ENCODE measurements at regions of chr1 and their contacts with region 1.

Region 1: GRCh38 chr1:109112652-109113285 is 1.1 kb upstream of the ELAPOR1 start:
- DNase-seq: peak; percentile 85
- ATAC-seq: peak; percentile 96
- H3K4me3 ChIP-seq: peak overlapping the region in 1 of 3 experiments; percentile 45; a peak in 2 of 6 replicates
- H3K27ac ChIP-seq: no peak overlapping the region
- H3K4me1 ChIP-seq: peaks cover 43% of the 10 kb centered on the region
- H3K27me3 ChIP-seq: peaks cover 2 to 36% of the 10 kb centered on the region in 2 experiments; a peak in 4 of 5 replicates
- CTCF ChIP-seq: peak; percentile 94
- EP300 ChIP-seq: no peak
- POLR2A ChIP-seq: no peak
- RAD21 ChIP-seq: peak; percentile 77

Region 2: DNA sequence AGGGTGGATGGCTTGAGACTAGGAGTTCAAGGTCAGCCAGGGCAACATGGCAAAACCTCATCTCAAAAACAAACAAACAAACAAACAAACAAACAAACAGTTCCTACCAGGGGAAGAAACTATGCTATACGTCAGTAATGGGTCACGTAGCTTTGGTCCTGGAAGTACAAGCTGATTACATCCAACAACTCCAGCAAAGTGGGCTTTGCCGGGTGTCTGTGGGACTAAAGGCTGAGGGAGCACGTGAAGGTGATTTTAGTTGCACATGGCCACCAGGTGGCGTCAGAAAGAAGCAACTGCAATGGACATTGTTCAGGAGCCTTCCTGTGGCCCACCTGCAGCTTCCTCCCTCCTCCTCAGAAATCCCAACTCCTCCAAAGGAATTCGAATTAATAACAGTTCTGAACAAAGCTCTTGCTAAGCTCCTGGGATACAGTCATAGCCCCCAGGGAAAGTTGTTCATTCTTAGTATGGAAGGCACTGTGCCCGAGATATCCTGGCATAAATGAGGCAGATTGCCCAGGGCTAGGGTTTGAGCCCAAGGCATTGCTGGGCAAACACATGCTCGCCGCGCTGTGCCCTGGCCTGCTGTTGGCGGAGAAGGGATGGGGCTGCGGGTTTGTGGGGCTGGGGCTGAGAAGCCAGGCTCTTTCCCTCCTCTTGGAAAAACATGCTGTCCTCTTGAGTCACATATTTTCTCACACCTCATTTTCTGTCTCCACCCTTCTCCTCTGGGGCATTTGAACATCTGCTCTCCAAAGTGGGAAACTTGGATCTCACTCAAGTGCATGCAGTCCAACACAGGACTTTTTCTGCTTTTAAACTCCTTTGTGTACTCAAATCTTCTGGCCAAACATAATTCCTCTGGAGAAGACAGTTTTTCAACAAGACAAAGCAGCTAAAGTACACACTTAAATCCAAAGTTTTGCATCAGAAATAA is 284.5 kb before region 1 on chr1:
- CTCF ChIA-PET with region 1: interaction called, 5 read pairs
- POLR2A ChIA-PET with region 1: no interaction called
- in situ Hi-C with region 1: no loop called
- intact Hi-C with region 1: loop called (anchors 2 kb)
- DNase-seq: peak; percentile 67
- ATAC-seq: peak; percentile 85
- H3K4me3 ChIP-seq: no peak overlapping the region
- H3K27ac ChIP-seq: no peak overlapping the region
- H3K4me1 ChIP-seq: peaks cover 35% of the 10 kb centered on the region
- H3K27me3 ChIP-seq: peaks cover 0 to 4% of the 10 kb centered on the region in 2 experiments; a peak in 2 of 5 replicates
- CTCF ChIP-seq: peak; percentile 85
- EP300 ChIP-seq: no peak
- POLR2A ChIP-seq: no peak
- RAD21 ChIP-seq: peak; percentile 66

Region 3: GRCh38 chr1:108963052-108963686 is 149.6 kb before region 1 on chr1 and contains the start of gene CLCC1:
- CTCF ChIA-PET with region 1: no interaction called
- POLR2A ChIA-PET with region 1: no interaction called
- in situ Hi-C with region 1: no loop called
- intact Hi-C with region 1: loop called (anchors 10 kb)
- DNase-seq: peak; percentile 83
- ATAC-seq: peak; percentile 95
- H3K4me3 ChIP-seq: peak within 1 kb of the TSS; percentile 75 to 88 (median 87)
- H3K27ac ChIP-seq: peak within 1 kb of the TSS; percentile 92
- H3K4me1 ChIP-seq: peaks cover 52% of the 10 kb centered on the region
- H3K27me3 ChIP-seq: no peaks in the 10 kb centered on the region; a peak in 1 of 5 replicates
- CTCF ChIP-seq: no peak
- EP300 ChIP-seq: no peak
- POLR2A ChIP-seq: peak; percentile 86 to 95
- RAD21 ChIP-seq: peak; percentile 71
- total RNA-seq, gene CLCC1: 14.1 and 25.8 TPM in 2 replicates

Region 4: DNA sequence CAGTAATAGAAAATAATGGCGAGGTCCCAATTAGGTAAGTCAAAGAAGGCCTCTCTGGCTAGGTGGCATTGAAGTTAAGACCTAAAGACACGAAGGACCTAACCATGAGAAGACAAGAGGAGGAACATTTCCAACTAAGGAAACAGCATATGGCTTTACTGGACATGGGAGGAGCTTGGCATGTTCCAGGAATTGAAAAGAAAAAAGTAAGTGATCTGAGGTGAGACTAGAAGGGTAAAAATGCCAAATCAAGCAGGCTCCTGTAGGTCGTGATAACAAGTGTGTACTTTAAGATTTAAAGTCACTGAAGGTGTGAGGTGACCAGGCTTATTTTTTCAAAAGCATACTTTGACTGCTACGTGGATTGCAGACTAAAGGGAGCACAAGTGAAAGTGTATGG is 136.1 kb before region 1 on chr1:
- CTCF ChIA-PET with region 1: no interaction called
- POLR2A ChIA-PET with region 1: no interaction called
- in situ Hi-C with region 1: no loop called
- intact Hi-C with region 1: no loop called
- DNase-seq: no peak
- ATAC-seq: no peak
- H3K4me3 ChIP-seq: no peak overlapping the region
- H3K27ac ChIP-seq: no peak overlapping the region
- H3K4me1 ChIP-seq: no peaks in the 10 kb centered on the region
- H3K27me3 ChIP-seq: no peaks in the 10 kb centered on the region
- CTCF ChIP-seq: no peak
- EP300 ChIP-seq: no peak
- POLR2A ChIP-seq: no peak
- RAD21 ChIP-seq: no peak

Region 5: DNA sequence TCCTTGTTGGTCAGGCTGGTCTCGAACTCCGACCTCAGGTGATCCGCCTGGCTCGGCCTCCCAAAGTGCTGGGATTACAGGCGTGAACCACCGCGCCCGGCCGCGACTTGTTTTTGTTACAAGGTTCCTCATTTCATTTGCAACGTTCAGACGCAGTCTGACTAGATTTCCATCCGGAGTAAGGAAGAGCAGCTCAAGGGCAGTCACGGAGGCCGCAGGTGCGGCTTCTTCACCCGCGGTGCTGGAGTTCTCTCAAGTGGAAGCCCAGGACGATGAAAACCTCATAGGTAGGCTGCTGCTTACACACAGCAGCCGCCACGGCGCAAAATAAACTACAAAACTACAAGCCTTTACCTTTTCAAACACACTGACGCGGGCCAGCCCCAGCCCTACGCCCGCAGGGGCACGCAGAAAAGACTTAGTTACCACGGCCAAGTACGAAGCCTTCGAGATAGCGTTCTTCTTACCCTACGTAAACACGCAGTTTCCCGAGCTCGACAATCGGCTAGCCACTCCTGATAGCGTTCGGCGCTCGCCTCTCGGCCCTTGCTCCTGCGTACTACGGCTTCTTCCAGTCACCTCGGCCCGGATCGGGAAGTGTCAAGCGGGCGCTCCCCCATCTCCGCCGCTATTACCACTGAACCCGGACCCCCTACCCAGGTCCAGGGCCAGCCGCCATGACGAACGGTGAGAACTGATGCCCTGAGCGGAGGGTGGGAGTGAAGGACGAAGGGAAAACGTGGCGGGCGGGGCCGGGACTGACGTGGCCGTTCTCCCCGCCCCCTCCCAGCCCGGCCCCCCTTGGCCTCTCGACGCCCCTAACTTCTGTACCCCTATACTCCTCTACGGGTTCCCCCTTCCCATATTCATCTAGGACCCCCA is 22.3 kb before region 1 on chr1 and contains the start of gene TMEM167B:
- CTCF ChIA-PET with region 1: interaction called, 15 read pairs
- POLR2A ChIA-PET with region 1: interaction called, 3 read pairs
- in situ Hi-C with region 1: no loop called
- intact Hi-C with region 1: loop called (anchors 1 kb)
- DNase-seq: peak; percentile 84
- ATAC-seq: peak; percentile 88
- H3K4me3 ChIP-seq: peak within 1 kb of the TSS; percentile 83 to 86 (median 85)
- H3K27ac ChIP-seq: peak within 1 kb of the TSS; percentile 90
- H3K4me1 ChIP-seq: peaks cover 30% of the 10 kb centered on the region
- H3K27me3 ChIP-seq: no peaks in the 10 kb centered on the region; a peak in 1 of 5 replicates
- CTCF ChIP-seq: peak; percentile 27; the same call in 1 of the 2 replicates
- EP300 ChIP-seq: peak; percentile 36 to 40; a peak in 2 of 4 replicates
- POLR2A ChIP-seq: peak in 1 of 2 experiments; percentile 71; a peak in 2 of 4 replicates
- RAD21 ChIP-seq: no peak
- total RNA-seq, gene TMEM167B: 22.4 and 24.4 TPM in 2 replicates

Region 6: DNA sequence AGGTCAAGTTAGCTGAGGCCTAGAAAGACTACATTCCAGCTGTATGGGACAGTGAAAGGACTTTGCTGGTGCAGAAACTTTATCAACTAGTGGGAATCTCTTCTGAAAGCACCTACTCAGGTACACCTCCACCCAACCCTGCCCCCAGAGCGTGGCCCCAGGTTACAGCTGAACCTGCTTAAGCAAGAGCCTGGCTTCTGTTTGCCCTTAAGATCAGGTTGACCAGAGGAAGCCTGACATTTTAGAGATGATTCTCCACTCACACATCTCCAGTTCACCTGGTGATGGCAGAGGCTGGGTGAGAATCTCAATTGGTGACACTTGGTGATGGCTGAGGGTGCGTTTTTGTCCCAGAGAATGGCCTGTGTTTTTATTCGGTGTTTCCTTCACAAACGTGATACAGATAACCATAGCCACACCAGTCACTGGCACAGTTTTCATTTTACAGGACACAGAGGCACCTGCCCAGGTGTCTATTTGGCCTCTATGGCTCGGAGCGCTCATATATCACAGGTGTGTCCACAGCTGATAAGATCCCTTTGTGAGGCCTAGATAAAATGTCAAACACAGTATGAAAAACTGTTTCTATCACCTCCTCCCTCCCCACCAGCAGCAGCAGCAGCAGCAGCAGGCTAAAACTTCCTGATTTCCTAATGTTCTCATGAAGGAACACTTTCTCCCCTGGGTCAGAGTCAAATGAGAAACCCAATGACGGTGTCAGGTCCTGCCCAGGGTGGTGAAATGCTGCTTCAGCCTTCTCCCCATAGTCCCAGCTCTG is 25.4 kb after region 1 on chr1:
- CTCF ChIA-PET with region 1: no interaction called
- POLR2A ChIA-PET with region 1: interaction called, 3 read pairs
- in situ Hi-C with region 1: no loop called
- intact Hi-C with region 1: loop called (anchors 2 kb)
- DNase-seq: no peak
- ATAC-seq: peak; percentile 33; the same call in 2 of the 3 replicates
- H3K4me3 ChIP-seq: peak overlapping the region in 1 of 3 experiments; percentile 7; a peak in 1 of 6 replicates
- H3K27ac ChIP-seq: peak overlapping the region; percentile 35
- H3K4me1 ChIP-seq: peaks cover 57% of the 10 kb centered on the region
- H3K27me3 ChIP-seq: no peaks in the 10 kb centered on the region
- CTCF ChIP-seq: no peak
- EP300 ChIP-seq: no peak
- POLR2A ChIP-seq: no peak
- RAD21 ChIP-seq: no peak

Region 7: GRCh38 chr1:109193653-109194590 is 81.2 kb after region 1 on chr1:
- CTCF ChIA-PET with region 1: interaction called, 3 read pairs
- POLR2A ChIA-PET with region 1: no interaction called
- in situ Hi-C with region 1: no loop called
- intact Hi-C with region 1: loop called (anchors 5 kb)
- DNase-seq: no peak
- ATAC-seq: peak; percentile 58
- H3K4me3 ChIP-seq: peak overlapping the region in 1 of 3 experiments; percentile 52; a peak in 1 of 6 replicates
- H3K27ac ChIP-seq: no peak overlapping the region
- H3K4me1 ChIP-seq: peaks cover 55% of the 10 kb centered on the region
- H3K27me3 ChIP-seq: no peaks in the 10 kb centered on the region; a peak in 2 of 5 replicates
- CTCF ChIP-seq: peak; percentile 84
- EP300 ChIP-seq: no peak
- POLR2A ChIP-seq: no peak
- RAD21 ChIP-seq: peak; percentile 63; the same call in 1 of the 2 replicates